Endothelial cell of umbilical vein (primary cell): ENCODE measurements at regions of chr17 and their contacts with region 1.

Region 1: DNA sequence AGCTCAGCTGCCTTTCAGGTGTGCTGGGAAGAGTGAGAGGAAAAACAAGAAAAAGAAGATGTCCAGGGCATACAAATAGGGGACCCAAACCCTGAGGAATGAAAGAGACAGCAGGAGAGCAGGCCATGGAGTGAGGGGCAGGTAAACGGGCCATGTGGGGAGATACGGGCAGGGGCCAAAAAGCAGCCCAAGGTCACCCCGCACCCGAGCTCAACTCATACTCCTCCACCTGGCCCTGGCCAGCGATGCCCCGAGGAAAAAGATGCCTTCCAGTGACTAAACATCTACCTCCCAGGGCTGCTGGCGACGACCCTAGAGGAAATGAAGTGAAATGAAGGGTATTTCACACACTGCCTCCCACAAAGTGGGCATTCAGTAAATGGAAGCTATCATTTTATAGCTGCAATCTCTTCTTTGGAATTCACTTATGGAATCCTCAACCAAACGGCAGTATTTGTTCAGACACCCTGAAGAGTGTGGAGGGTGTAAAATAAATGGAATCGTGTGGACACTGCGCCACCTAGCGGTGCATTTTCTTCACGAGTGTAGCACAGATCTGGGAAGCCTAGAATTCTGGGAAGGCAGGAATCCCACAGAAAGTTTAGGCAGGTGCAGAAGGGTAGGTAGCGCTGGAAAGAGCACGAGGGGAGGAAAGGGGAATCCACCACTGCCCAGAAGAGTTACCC is 14.9 kb downstream of the ELAC2 start:
- DNase-seq: peak; percentile 50
- H3K4me3 ChIP-seq: no peak overlapping the region
- H3K27ac ChIP-seq: no peak overlapping the region
- H3K4me1 ChIP-seq: no peaks in the 10 kb centered on the region
- H3K27me3 ChIP-seq: no peaks in the 10 kb centered on the region
- CTCF ChIP-seq: peak; percentile 72 to 87
- POLR2A ChIP-seq: no peak

Region 2: DNA sequence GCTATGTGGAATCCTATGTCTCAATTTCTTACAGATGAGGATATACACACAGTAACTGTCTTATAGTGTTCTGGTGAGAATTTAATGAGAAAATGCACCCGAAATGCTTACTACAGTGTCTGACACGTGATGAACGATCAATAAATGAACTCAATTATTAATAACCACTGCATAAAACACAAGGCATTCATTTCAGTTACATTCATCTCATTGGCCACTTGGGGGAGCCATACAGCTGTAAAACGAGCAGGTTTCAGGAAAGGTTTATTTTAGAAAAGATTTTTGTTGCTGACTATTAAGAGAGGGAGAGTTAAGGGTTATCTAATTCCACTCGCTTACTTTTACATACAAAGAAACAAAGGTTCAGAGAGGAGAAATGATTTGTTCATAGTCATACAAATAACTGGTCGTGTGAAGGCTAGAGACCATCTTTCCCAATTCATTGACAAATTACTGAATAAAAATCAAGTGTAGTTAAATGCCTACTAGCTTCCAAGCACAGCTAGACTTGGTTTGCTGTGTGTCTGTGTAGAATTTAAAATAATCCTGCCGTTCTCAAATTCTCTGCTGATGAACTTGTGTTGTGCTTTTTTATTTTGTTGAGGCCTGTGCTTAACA is 822.2 kb before region 1 on chr17:
- CTCF ChIA-PET with region 1: interaction called, 10 read pairs
- POLR2A ChIA-PET with region 1: no interaction called
- dilution Hi-C with region 1: no loop called
- intact Hi-C with region 1: loop called (anchors 1 kb)
- DNase-seq: peak; percentile 35
- H3K4me3 ChIP-seq: no peak overlapping the region
- H3K27ac ChIP-seq: no peak overlapping the region
- H3K4me1 ChIP-seq: no peaks in the 10 kb centered on the region
- H3K27me3 ChIP-seq: no peaks in the 10 kb centered on the region
- CTCF ChIP-seq: peak; percentile 48 to 52
- POLR2A ChIP-seq: no peak

Region 3: DNA sequence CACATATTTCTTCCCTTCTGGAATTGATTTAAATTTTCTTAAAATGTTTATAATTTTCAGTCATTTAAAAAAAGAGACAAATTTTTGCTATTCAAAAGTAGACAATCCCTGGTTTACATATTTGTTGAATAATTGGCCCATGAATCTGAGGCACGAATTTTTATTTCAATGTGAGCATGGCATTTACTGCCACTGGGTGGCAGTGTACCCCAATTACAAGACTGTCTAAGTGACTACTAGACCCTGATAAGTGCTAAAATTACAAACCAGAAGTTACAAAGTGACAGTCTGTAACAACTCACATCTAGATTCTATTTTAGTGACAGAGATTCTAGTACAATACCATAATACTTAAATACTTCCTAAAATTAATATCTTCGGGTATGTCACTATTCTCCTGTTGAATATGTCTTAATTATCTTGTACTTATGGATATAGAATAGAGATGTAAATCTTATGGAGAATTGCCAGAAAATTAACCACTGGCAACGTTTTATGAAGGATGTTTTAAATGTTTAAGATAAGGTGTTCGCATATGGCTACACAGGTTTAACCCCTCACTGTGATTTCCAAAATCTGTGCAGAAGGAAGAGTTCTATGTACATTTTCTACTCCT is 746.4 kb before region 1 on chr17:
- CTCF ChIA-PET with region 1: interaction called, 6 read pairs
- POLR2A ChIA-PET with region 1: no interaction called
- dilution Hi-C with region 1: no loop called
- intact Hi-C with region 1: loop called (anchors 1 kb)
- DNase-seq: peak; percentile 39
- H3K4me3 ChIP-seq: no peak overlapping the region
- H3K27ac ChIP-seq: no peak overlapping the region
- H3K4me1 ChIP-seq: no peaks in the 10 kb centered on the region
- H3K27me3 ChIP-seq: no peaks in the 10 kb centered on the region
- CTCF ChIP-seq: peak; percentile 51 to 52
- POLR2A ChIP-seq: no peak

Region 4: DNA sequence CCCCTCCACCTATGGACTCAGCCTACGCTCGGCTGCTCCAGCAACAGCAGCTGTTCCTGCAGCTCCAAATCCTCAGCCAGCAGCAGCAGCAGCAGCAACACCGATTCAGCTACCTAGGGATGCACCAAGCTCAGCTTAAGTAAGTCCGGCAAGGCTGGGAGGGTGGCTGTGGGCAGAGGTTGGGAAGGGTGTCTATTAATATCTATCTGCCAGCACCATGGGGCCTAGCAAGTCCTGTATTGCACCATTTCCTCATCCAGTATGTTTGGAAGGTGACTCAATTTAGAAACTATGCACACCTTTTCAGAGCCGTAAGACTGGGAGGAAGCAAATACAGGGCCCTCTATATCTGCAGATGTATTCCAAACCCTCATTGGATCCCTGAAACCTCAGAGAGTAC is 258.6 kb before region 1 on chr17:
- CTCF ChIA-PET with region 1: no interaction called
- POLR2A ChIA-PET with region 1: no interaction called
- dilution Hi-C with region 1: no loop called
- intact Hi-C with region 1: loop called (anchors 1 kb)
- DNase-seq: no peak
- H3K4me3 ChIP-seq: no peak overlapping the region
- H3K27ac ChIP-seq: no peak overlapping the region
- H3K4me1 ChIP-seq: no peaks in the 10 kb centered on the region
- H3K27me3 ChIP-seq: no peaks in the 10 kb centered on the region
- CTCF ChIP-seq: no peak
- POLR2A ChIP-seq: no peak

Region 5: GRCh38 chr17:12936501-12936900 is 66.4 kb before region 1 on chr17:
- CTCF ChIA-PET with region 1: no interaction called
- POLR2A ChIA-PET with region 1: no interaction called
- dilution Hi-C with region 1: no loop called
- intact Hi-C with region 1: no loop called
- DNase-seq: no peak
- H3K4me3 ChIP-seq: no peak overlapping the region
- H3K27ac ChIP-seq: no peak overlapping the region
- H3K4me1 ChIP-seq: no peaks in the 10 kb centered on the region
- H3K27me3 ChIP-seq: no peaks in the 10 kb centered on the region
- CTCF ChIP-seq: no peak
- POLR2A ChIP-seq: no peak

Region 6: DNA sequence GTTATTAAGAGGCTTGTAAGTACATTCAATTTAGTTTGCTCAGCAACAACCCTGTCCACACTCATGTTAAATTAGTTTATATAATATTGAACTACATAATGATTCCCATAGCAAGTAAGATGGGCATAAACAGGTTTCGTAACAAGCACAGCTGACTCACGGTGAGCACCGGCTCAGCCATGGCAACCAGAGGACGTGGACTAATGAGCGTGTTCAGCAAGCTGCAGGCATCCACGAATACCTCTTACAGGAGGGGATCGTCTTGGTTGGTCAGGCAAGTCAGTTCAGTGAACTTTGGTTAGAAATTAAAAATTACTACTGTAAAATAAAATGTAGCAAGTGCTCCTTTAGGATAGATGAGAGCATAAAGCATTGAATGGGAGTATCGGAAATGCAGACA is 43.5 kb before region 1 on chr17:
- CTCF ChIA-PET with region 1: no interaction called
- POLR2A ChIA-PET with region 1: no interaction called
- dilution Hi-C with region 1: no loop called
- intact Hi-C with region 1: no loop called
- DNase-seq: no peak
- H3K4me3 ChIP-seq: no peak overlapping the region
- H3K27ac ChIP-seq: no peak overlapping the region
- H3K4me1 ChIP-seq: no peaks in the 10 kb centered on the region
- H3K27me3 ChIP-seq: no peaks in the 10 kb centered on the region
- CTCF ChIP-seq: no peak
- POLR2A ChIP-seq: no peak

Region 7: GRCh38 chr17:13017659-13018459 is 14.9 kb after region 1 on chr17 and contains the start of gene ELAC2:
- CTCF ChIA-PET with region 1: interaction called, 18 read pairs
- POLR2A ChIA-PET with region 1: no interaction called
- dilution Hi-C with region 1: no loop called
- intact Hi-C with region 1: no loop called
- DNase-seq: peak; percentile 99
- H3K4me3 ChIP-seq: peak within 1 kb of the TSS; percentile 22 to 88 (median 87)
- H3K27ac ChIP-seq: peak within 1 kb of the TSS; percentile 36
- H3K4me1 ChIP-seq: peaks cover 11% of the 10 kb centered on the region
- H3K27me3 ChIP-seq: no peaks in the 10 kb centered on the region
- CTCF ChIP-seq: no peak
- POLR2A ChIP-seq: peak; percentile 96
- total RNA-seq, gene ELAC2: 64.8 and 71.6 TPM in 2 replicates

Region 8: DNA sequence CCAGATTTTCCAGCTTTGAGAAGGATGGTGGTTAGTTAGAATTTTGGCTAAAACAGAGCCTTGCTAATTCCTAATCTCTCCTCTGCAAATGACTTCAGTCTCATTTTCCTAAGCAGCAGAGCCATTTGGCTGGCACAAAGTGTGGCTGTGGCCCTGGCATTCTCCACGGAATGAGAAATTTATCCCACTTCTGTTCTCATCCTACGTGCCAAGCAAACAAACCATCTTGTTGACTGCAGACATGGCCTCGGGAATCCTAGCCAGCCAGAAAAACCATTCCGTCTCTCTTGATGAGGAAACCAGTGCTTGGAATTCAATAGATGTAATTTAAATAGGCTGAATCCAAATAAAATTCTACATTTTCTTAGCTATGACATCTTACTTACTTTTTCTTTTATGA is 49.0 kb after region 1 on chr17:
- CTCF ChIA-PET with region 1: no interaction called
- POLR2A ChIA-PET with region 1: no interaction called
- dilution Hi-C with region 1: no loop called
- intact Hi-C with region 1: no loop called
- DNase-seq: no peak
- H3K4me3 ChIP-seq: no peak overlapping the region
- H3K27ac ChIP-seq: no peak overlapping the region
- H3K4me1 ChIP-seq: no peaks in the 10 kb centered on the region
- H3K27me3 ChIP-seq: no peaks in the 10 kb centered on the region
- CTCF ChIP-seq: no peak
- POLR2A ChIP-seq: no peak